Mammary epithelial cell (primary cell): ENCODE measurements at regions of chr5 and their contacts with region 1.

Region 1: GRCh38 chr5:158382473-158382872 is 523.5 kb upstream of the CLINT1 start:
- DNase-seq: peak; percentile 94
- H3K4me3 ChIP-seq: no peak overlapping the region
- H3K27ac ChIP-seq: peak overlapping the region; percentile 39
- H3K4me1 ChIP-seq: peaks cover 58% of the 10 kb centered on the region
- H3K27me3 ChIP-seq: no peaks in the 10 kb centered on the region
- CTCF ChIP-seq: no peak

Region 2: DNA sequence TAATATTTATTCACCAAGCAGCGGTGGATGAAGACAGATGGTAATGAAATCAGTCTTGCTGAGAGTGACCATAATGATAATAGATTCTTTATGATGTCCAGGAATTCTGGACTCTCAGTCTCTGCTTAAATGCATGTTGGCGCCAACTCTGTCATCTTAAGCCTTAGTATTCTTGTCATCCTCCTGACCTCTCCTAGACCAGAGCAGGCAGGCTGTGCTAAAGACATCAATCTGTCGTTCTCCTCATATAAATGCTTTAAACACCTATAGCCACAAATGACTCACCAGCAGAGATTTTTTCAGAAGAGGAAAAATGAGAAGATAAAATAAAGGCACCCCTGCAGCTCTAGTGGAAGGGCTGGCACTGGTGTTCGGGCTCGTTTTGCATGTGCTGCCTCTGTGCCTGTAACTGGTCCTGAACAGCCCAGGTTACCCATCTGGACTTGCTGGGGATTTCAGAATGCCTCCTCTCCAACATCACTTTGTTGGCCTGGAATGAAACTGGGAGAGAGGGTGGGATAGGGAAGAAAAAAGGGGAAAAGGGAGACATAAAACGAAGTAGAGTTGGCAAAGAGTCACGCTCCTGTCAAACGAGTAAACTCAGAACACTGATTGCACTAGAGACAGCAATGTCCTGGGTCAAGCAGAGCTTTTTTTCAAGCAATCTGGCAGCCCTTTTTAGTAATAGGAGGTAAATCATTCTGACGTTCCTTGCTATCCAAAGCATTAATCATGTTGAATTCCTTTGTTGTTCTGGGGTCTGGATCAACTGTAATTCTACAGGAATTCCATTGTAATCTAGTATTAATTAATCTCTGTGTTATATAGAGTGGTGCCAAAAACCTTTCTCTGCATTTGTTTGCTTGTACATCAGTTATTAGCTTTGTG is 328.0 kb before region 1 on chr5:
- CTCF ChIA-PET with region 1: no interaction called
- dilution Hi-C with region 1: no loop called
- in situ Hi-C with region 1: loop called in 1 of 2 experiments (anchors 10 kb)
- intact Hi-C with region 1: no loop called
- DNase-seq: no peak
- H3K4me3 ChIP-seq: no peak overlapping the region
- H3K27ac ChIP-seq: no peak overlapping the region
- H3K4me1 ChIP-seq: peaks cover 4% of the 10 kb centered on the region
- H3K27me3 ChIP-seq: no peaks in the 10 kb centered on the region
- CTCF ChIP-seq: no peak

Region 3: DNA sequence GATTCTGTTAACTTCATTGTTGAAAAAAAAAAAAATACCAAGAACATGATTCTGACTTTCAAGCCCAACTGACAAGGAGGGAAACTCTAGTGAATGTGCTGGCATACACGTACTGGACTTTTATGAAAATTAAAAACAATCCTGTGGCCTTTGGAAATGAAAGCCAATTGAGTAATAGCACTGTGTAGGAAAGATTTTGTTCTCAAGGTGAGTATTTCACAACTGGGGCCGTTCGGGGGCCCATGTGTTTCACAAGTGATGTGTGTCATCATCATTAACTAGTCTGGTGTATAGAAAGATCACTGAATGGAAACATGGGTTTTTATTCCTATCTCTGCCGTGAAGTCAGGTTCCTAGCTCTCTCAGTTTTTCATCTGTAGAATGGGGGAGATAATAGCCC is 81.5 kb after region 1 on chr5:
- CTCF ChIA-PET with region 1: no interaction called
- dilution Hi-C with region 1: no loop called
- in situ Hi-C with region 1: no loop called
- intact Hi-C with region 1: loop called (anchors 5 kb)
- DNase-seq: peak; percentile 66
- H3K4me3 ChIP-seq: no peak overlapping the region
- H3K27ac ChIP-seq: no peak overlapping the region
- H3K4me1 ChIP-seq: peaks cover 14% of the 10 kb centered on the region
- H3K27me3 ChIP-seq: no peaks in the 10 kb centered on the region
- CTCF ChIP-seq: no peak